ENCODE measurements at regions of chr10 and their contacts with region 1.

Region 1: GRCh38 chr10:92848441-92849233 is at the start of gene EXOC6:
- DNase-seq: peak; percentile 81
- H3K4me3 Mint-ChIP-seq: peak within 1 kb of the TSS; percentile 80
- H3K27ac Mint-ChIP-seq: peak within 1 kb of the TSS; percentile 80
- H3K4me1 Mint-ChIP-seq: peaks cover 39% of the 10 kb centered on the region
- H3K27me3 Mint-ChIP-seq: no peaks in the 10 kb centered on the region
- total RNA-seq, gene EXOC6: 12.4 and 12.5 TPM in 2 replicates

Region 2: GRCh38 chr10:92678206-92678605 is 170.4 kb before region 1 on chr10:
- intact Hi-C with region 1: no loop called
- DNase-seq: no peak
- H3K4me3 Mint-ChIP-seq: no peak overlapping the region
- H3K27ac Mint-ChIP-seq: no peak overlapping the region
- H3K4me1 Mint-ChIP-seq: no peaks in the 10 kb centered on the region
- H3K27me3 Mint-ChIP-seq: peaks cover 14% of the 10 kb centered on the region

Region 3: GRCh38 chr10:92689663-92690210 is 158.9 kb before region 1 on chr10 and contains the start of gene HHEX:
- intact Hi-C with region 1: loop called (anchors 5 kb)
- DNase-seq: no peak
- H3K4me3 Mint-ChIP-seq: peak within 1 kb of the TSS; percentile 62
- H3K27ac Mint-ChIP-seq: no peak within 1 kb of the TSS
- H3K4me1 Mint-ChIP-seq: peaks cover 21% of the 10 kb centered on the region
- H3K27me3 Mint-ChIP-seq: peaks cover 72% of the 10 kb centered on the region
- total RNA-seq, gene HHEX: 0.32 and 0.46 TPM in 2 replicates

Region 4: DNA sequence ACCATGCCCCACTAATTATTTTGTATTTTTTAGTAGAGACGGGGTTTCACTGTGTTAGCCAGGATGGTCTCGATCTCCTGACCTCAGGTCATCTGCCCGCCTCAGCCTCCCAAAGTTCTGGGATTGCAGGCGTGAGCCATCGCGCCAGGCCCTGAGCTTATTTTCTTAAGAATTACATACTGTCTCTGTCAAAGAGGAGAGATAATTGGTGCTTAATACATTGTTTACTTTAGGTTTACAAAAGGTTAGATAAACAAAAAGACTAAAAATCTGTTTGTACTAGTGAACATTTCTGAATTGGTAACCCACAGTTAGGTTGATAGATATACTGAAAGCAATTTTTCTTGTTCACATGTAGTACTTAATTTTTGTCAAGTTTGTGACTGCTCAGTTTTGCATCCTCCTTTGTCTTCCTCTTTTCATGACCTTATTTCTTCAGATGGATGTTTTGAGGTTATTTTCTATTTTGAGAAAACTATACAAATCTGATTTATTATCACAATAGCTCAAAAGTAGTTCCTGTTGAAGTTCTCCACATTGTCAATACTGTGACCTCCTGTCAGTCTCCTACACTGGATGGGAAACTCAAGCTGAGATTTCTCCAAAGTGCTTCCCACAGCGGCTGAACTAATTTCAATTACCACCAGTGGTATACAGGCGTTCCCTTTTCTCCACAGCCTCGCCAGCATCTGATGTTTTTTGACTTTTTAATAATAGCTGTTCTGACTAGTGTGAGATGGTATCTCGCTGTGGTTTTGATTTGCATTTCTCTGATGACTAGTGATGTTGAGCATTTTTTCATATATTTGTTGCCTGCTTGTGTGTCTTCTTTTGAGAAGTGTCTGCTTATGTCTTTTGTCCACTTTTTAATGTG is 136.4 kb before region 1 on chr10:
- intact Hi-C with region 1: no loop called
- DNase-seq: no peak
- H3K4me3 Mint-ChIP-seq: no peak overlapping the region
- H3K27ac Mint-ChIP-seq: no peak overlapping the region
- H3K4me1 Mint-ChIP-seq: peaks cover 3% of the 10 kb centered on the region
- H3K27me3 Mint-ChIP-seq: peaks cover 26% of the 10 kb centered on the region

Region 5: GRCh38 chr10:92880233-92880861 is 31.7 kb after region 1 on chr10:
- intact Hi-C with region 1: loop called (anchors 5 kb)
- DNase-seq: no peak
- H3K4me3 Mint-ChIP-seq: no peak overlapping the region
- H3K27ac Mint-ChIP-seq: no peak overlapping the region
- H3K4me1 Mint-ChIP-seq: peaks cover 8% of the 10 kb centered on the region
- H3K27me3 Mint-ChIP-seq: peaks cover 1% of the 10 kb centered on the region

Region 6: DNA sequence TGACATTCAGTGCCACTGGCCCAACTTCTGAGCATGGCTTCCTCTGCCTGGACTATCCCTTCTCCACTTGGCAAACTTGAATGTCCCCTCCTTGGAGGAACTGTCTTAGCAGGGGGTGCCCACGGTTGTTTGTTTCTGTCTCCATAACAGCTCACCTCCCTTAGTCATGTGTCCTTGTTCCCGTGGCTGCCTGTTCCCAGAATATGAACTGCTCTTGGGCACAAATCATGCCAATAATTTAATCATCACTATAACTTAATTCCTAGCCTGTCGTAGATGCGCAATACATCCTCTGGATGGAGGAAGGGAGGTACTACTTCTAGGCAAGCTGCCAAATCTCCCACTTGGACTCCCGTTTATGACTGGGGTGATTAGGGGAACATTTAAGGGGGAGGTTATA is 460.4 kb after region 1 on chr10:
- intact Hi-C with region 1: no loop called
- DNase-seq: no peak
- H3K4me3 Mint-ChIP-seq: no peak overlapping the region
- H3K27ac Mint-ChIP-seq: no peak overlapping the region
- H3K4me1 Mint-ChIP-seq: peaks cover 2% of the 10 kb centered on the region
- H3K27me3 Mint-ChIP-seq: no peaks in the 10 kb centered on the region

Region 7: GRCh38 chr10:93515071-93516005 is 666.7 kb after region 1 on chr10:
- intact Hi-C with region 1: loop called (anchors 10 kb)
- DNase-seq: no peak
- H3K4me3 Mint-ChIP-seq: no peak overlapping the region
- H3K27ac Mint-ChIP-seq: no peak overlapping the region
- H3K4me1 Mint-ChIP-seq: peaks cover 8% of the 10 kb centered on the region
- H3K27me3 Mint-ChIP-seq: no peaks in the 10 kb centered on the region

Measured in activated T-helper 2 cell treated with anti-CD3 and anti-CD28 coated beads, Interferon-gamma antibody, Interleukin-2, Interleukin-4, amounts not matched to agents 10 μg/mL and 5 μg/mL and 100 μg/mL, durations not matched to agents 14 hours and 24 hours and 36 hours (primary cell).